Esophagus squamous epithelium (tissue), 5 donors: ENCODE measurements at regions of chr4 and their contacts with region 1.

Region 1: GRCh38 chr4:1346781-1347409 is at the start of gene UVSSA:
- DNase-seq: peak; percentile 99
- H3K4me3 ChIP-seq: peak within 1 kb of the TSS; percentile 69 to 97 (median 83)
- H3K27ac ChIP-seq: peak within 1 kb of the TSS; percentile 95 to 100 (median 100)
- H3K4me1 ChIP-seq: peaks cover 20 to 55% (median 28%) of the 10 kb centered on the region in 3 donors
- H3K27me3 ChIP-seq: no peaks in the 10 kb centered on the region
- CTCF ChIP-seq: no peak
- POLR2A ChIP-seq: peak in 3 of 4 donors; percentile 52 to 97 (median 93)
- total RNA-seq, gene UVSSA: 7.2 to 12.8 (median 11.5) TPM

Region 2: DNA sequence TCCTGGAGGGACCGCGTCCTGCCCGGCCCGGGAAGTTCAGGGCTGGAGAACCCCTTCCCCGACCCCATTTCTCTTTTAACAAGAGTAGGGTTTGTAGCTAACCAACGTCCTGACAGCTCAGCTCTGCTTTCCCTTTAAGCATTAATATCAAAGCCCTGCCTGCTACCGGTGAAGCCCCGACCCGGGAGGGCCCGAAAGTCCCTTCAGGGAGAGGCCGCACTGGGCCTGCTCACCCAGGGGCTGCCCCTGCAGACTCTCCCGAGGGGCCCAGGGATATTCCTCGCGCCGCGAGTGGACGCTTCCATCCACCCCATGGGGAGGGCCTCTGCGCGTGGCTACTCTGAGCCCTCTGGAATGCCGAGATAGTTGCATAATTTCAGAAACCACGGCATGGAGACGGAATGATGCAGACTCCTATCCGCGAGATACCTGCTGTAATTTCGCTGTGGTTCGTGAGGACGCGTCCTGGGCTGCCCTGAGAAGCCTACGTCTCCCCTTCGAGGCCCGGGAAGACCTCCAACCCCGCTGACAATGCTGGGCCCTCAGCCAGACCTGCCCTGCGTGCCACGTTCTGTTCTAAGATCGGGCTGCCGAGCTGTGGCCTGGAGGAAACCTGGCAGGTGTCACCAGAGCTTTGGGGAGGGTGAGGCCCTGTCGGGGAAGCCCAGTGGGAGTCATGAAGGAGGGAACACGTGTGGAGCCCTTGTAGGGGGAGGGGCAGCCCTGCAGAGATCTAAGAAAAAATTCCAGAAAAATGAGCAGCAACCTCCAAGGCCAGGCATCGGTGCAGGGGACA is 97.0 kb before region 1 on chr4:
- intact Hi-C with region 1: loop called (anchors 5 kb)
- DNase-seq: no peak
- H3K4me3 ChIP-seq: peak overlapping the region; percentile 56 to 96 (median 80)
- H3K27ac ChIP-seq: peak overlapping the region; percentile 88 to 99 (median 97)
- H3K4me1 ChIP-seq: peaks cover 34 to 56% (median 35%) of the 10 kb centered on the region in 3 donors
- H3K27me3 ChIP-seq: no peaks in the 10 kb centered on the region
- CTCF ChIP-seq: no peak
- POLR2A ChIP-seq: peak in 1 of 4 donors; percentile 6

Region 3: DNA sequence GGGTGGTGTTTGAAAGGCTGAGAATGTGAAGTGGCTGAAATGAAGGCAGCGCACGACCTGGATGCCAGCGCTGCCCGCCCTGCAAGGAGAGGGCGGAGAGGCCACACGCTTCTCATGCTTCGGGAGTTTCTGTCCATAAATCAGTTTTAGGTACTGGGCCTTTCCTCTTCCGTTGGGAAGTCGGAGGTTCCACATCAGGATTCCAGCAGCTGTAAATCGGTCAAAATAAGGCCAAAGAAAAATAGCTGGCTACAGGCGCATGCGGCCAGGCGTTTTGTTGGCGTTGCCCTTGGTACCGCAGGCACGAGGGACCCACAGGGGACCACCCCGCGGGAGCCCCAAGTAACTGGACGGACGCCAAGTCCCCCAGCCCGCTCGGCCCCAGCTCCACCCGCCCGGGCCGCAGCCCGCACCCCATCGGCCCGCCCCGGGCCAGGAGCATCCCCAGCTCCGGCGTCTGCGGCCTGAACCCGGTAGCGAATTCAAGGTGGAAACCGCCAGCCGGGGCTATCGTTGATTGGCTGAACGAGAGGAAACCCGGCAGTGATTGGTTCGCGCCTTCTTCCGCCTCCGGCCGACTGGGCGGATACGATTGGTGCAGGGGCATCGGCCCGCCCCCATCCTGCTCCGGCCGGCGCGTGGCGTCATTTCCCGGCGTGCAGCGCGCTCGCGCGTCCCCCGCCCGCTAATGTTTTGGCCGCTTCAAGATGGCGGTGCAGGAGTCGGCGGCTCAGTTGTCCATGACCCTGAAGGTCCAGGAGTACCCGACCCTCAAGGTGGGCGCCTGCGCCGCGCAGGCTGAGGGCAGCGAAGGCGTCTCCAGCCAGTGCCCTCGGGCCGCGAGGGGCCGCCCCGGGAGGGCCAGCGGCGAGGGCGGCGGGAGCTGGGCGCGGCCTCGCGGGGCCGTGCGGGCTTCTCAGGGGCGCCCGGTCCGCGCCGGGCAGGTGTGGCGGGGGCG is 57.4 kb before region 1 on chr4 and contains the start of gene MAEA:
- intact Hi-C with region 1: loop called (anchors 5 kb)
- DNase-seq: peak; percentile 73
- H3K4me3 ChIP-seq: peak within 1 kb of the TSS; percentile 80 to 98 (median 92)
- H3K27ac ChIP-seq: peak within 1 kb of the TSS; percentile 96 to 100 (median 98)
- H3K4me1 ChIP-seq: peaks cover 19 to 51% (median 37%) of the 10 kb centered on the region in 3 donors
- H3K27me3 ChIP-seq: no peaks in the 10 kb centered on the region
- CTCF ChIP-seq: peak in 1 of 6 experiments; percentile 21
- POLR2A ChIP-seq: peak in 3 of 4 donors; percentile 40 to 90 (median 76)
- total RNA-seq, gene MAEA: 56.6 to 78.7 (median 67.5) TPM

Region 4: DNA sequence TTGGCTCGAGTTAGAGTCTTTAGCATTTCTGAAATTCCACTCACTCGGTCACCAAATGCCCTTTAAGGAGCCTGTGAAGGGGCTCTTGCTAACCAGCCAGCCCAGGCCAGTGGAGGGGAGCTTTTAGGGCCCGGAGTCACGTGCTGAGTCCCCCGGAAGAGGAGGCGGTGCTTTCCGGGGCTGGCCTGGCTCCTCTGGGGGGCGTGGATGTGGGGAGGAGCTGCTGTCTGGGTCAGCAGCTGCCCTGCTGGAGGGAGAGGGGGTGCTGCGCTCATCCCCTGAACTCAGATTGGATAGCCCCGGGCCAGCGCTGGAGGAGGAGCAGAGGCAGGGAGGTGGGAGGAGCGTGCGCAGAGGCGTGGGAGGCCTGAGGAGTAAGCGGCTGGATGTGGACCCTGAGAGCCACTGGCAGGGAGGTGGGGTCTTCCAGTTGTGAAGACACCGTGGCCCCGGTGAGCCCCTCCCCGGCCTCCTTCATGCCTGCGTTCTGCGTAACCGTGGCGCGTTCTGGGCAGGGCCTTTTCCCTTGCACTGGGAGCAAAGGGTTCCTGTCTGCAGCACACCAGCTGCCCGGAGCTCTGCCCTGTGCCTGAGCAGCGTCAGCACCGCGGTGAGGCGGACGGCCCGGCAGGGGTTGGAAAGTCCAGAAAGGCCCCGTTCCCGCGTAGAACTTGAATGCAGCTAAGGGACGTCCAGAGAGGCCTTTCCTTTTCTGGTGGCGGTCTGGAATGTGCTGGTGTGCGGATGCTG is 37.5 kb before region 1 on chr4:
- intact Hi-C with region 1: loop called (anchors 5 kb)
- DNase-seq: peak; percentile 36
- H3K4me3 ChIP-seq: peak overlapping the region; percentile 11 to 61 (median 38)
- H3K27ac ChIP-seq: peak overlapping the region; percentile 18 to 76 (median 50)
- H3K4me1 ChIP-seq: peaks cover 17 to 66% (median 41%) of the 10 kb centered on the region in 3 donors
- H3K27me3 ChIP-seq: no peaks in the 10 kb centered on the region
- CTCF ChIP-seq: no peak
- POLR2A ChIP-seq: no peak

Region 5: DNA sequence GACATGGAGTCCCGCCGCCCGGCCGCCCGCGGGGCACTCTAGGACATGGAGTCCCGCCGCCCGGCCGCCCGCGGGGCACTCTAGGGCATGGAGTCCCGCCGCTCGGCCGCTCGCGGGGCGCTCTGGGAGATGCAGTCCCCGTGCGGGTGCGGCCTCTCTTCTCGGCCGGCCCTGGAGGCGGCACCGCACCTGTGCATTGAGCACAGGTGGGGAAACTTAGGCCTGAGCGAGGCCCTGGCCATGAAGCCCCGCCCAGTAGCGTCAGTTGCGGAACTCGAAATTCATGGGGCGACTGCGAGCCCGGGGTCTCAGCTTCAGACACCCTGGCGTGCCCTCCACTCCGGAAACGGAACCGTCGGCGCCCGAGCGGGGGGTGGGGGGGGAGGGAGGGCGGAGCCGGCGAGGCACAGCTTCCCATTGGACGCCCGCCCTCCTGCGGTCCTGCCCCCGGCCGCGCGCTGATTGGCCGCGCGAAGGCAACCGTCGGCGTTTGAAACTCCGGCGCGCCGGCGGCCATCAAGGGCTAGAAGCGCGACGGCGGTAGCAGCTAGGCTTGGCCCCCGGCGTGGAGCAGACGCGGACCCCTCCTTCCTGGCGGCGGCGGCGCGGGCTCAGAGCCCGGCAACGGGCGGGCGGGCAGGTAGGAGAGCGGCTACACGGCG is 374.2 kb after region 1 on chr4 and contains the starts of genes TACC3 and TMEM129:
- intact Hi-C with region 1: no loop called
- DNase-seq: peak; percentile 76
- H3K4me3 ChIP-seq: peak within 1 kb of the TSS; percentile 77 to 89 (median 86)
- H3K27ac ChIP-seq: peak within 1 kb of the TSS; percentile 93 to 99 (median 94)
- H3K4me1 ChIP-seq: peaks cover 49 to 68% (median 49%) of the 10 kb centered on the region in 3 donors
- H3K27me3 ChIP-seq: no peaks in the 10 kb centered on the region
- CTCF ChIP-seq: peak in 1 of 6 experiments; percentile 11
- POLR2A ChIP-seq: peak in 3 of 4 donors; percentile 42 to 67 (median 63)
- total RNA-seq, gene TACC3: 14.9 to 41.3 (median 19.6) TPM
- total RNA-seq, gene TMEM129: 30.4 to 47.5 (median 38.3) TPM